Breast epithelium (tissue), 4 donors: ENCODE measurements at regions of chr4 and their contacts with region 1.

Region 1: DNA sequence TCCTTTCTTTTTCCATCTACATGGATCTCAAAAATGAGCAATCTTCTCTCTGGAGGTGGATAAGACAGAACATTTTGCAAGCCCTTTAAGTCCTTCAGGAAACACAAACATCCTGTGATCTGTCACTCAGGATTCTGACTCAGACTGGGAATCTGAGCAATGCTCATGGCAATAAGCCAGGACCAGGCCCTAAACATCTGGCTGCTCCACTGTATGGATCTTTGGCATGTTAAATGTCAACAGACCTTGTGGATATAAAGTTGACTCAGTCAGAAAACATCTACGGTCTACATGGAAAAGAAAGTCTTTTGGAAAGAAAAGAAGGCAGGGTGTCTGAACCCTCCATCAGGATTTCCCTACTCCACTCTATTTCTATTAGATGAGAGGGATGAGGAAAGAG is 17.8 kb upstream of the CHIC2 start:
- DNase-seq: no peak
- H3K4me3 ChIP-seq: no peak overlapping the region
- H3K27ac ChIP-seq: no peak overlapping the region
- H3K4me1 ChIP-seq: no peaks in the 10 kb centered on the region
- H3K27me3 ChIP-seq: no peaks in the 10 kb centered on the region
- CTCF ChIP-seq: no peak
- POLR2A ChIP-seq: no peak

Region 2: GRCh38 chr4:53987761-53988171 is 94.4 kb before region 1 on chr4:
- intact Hi-C with region 1: loop called (anchors 10 kb)
- DNase-seq: no peak
- H3K4me3 ChIP-seq: no peak overlapping the region
- H3K27ac ChIP-seq: peak overlapping the region; percentile 64 to 84
- H3K4me1 ChIP-seq: no peaks in the 10 kb centered on the region
- H3K27me3 ChIP-seq: no peaks in the 10 kb centered on the region
- CTCF ChIP-seq: no peak
- POLR2A ChIP-seq: no peak

Region 3: DNA sequence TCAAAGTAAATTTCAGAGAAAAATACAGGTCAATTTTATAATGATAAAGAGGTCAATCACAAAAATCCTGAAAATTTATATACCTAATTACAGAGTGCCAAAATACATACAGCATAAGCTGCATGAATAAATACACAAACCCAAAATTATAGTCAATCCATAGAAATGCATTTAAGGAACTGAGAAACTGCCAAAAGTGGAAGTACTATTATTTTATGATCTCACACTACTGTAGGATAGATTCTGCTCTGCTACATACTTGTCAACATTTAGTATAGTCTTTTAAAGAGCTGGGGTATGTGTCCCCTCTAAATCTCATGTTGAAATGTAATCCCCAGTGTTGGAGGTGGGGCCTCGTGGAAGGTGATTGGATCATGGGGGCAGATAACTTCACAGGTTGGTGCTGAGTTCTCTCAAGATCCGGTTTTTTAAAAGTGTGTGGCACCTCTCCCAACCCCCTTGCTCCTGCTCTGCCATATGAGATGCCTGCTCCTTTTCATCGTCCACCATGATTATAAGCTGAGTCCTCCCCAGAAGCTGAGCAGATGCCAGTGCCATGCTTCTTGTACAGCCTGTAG is 49.5 kb before region 1 on chr4:
- intact Hi-C with region 1: no loop called
- DNase-seq: no peak
- H3K4me3 ChIP-seq: no peak overlapping the region
- H3K27ac ChIP-seq: no peak overlapping the region
- H3K4me1 ChIP-seq: no peaks in the 10 kb centered on the region
- H3K27me3 ChIP-seq: no peaks in the 10 kb centered on the region
- CTCF ChIP-seq: no peak
- POLR2A ChIP-seq: no peak

Region 4: DNA sequence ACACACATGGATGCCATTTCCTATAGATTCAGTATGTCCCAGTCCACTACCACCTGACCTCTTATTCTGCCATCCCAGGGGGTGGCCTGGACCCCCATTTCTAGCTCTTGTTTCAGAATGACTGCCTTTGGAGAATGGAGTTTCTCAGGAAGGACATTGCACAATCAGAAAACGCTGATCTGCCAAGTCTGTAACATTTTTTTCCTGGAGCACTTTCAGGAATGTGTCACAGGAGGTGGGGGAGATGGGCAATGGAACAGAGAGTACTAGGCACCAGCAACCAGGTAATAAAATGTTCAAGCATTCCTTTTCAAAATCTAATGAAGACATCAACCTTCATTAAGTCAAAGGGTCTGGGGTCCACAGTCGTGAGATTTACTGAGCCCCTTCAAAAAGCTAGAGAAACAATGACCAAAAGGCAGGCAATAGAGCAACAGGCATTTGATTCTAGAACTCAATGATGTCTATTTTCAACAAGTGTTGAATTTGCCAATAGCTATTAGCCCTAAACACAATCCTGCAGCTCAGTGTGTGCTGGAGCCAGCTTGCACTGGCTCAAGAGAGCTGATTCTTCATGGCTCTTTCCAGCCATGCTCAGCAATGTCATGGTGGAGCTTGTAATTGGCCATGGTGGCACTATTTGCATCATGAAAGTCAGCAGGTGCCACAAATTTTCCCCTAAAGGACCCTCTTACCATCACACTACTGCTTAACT is 956.2 kb after region 1 on chr4:
- intact Hi-C with region 1: loop called (anchors 10 kb)
- DNase-seq: peak in 1 of 2 donors; percentile 53
- H3K4me3 ChIP-seq: no peak overlapping the region
- H3K27ac ChIP-seq: peak overlapping the region; percentile 14 to 33
- H3K4me1 ChIP-seq: no peaks in the 10 kb centered on the region
- H3K27me3 ChIP-seq: no peaks in the 10 kb centered on the region
- CTCF ChIP-seq: no peak
- POLR2A ChIP-seq: no peak